Naive thymus-derived CD4-positive, alpha-beta T cell (primary cell): ENCODE measurements at regions of chrX and their contacts with region 1.

Region 1: GRCh38 chrX:46446727-46447378 is 98.4 kb downstream of the ZNF674 start:
- DNase-seq: peak; percentile 75 to 86 (median 81)
- ATAC-seq: peak; percentile 94
- H3K4me3 ChIP-seq: peak overlapping the region; percentile 83
- H3K4me3 Mint-ChIP-seq: peak overlapping the region; percentile 77 to 91 (median 85)
- H3K27ac ChIP-seq: peak overlapping the region; percentile 86
- H3K27ac Mint-ChIP-seq: peak overlapping the region; percentile 79 to 92 (median 90)
- H3K4me1 ChIP-seq: peaks cover 5 to 7% of the 10 kb centered on the region in 2 donors
- H3K4me1 Mint-ChIP-seq: peaks cover 0 to 29% (median 20%) of the 10 kb centered on the region in 7 donors
- H3K27me3 ChIP-seq: no peaks in the 10 kb centered on the region
- H3K27me3 Mint-ChIP-seq: no peaks in the 10 kb centered on the region

Region 2: GRCh38 chrX:44975666-44976263 is 1471.1 kb before region 1 on chrX:
- CTCF ChIA-PET with region 1: no interaction called
- POLR2A ChIA-PET with region 1: no interaction called
- intact Hi-C with region 1: no loop called
- DNase-seq: no peak
- ATAC-seq: no peak
- H3K4me3 ChIP-seq: no peak overlapping the region
- H3K4me3 Mint-ChIP-seq: no peak overlapping the region
- H3K27ac ChIP-seq: no peak overlapping the region
- H3K27ac Mint-ChIP-seq: no peak overlapping the region
- H3K4me1 ChIP-seq: no peaks in the 10 kb centered on the region
- H3K4me1 Mint-ChIP-seq: peaks cover 11 to 63% (median 22%) of the 10 kb centered on the region in 7 donors
- H3K27me3 ChIP-seq: no peaks in the 10 kb centered on the region
- H3K27me3 Mint-ChIP-seq: no peaks in the 10 kb centered on the region

Region 3: GRCh38 chrX:46408553-46409407 is 38.1 kb before region 1 on chrX:
- CTCF ChIA-PET with region 1: no interaction called
- POLR2A ChIA-PET with region 1: no interaction called
- intact Hi-C with region 1: loop called in 1 of 2 experiments (anchors 2 kb)
- DNase-seq: peak; percentile 12 to 61 (median 38)
- ATAC-seq: peak; percentile 54
- H3K4me3 ChIP-seq: no peak overlapping the region
- H3K4me3 Mint-ChIP-seq: no peak overlapping the region
- H3K27ac ChIP-seq: no peak overlapping the region
- H3K27ac Mint-ChIP-seq: peak overlapping the region in 1 of 9 donors; percentile 59
- H3K4me1 ChIP-seq: no peaks in the 10 kb centered on the region
- H3K4me1 Mint-ChIP-seq: peaks cover 0 to 2% (median 0%) of the 10 kb centered on the region in 7 donors
- H3K27me3 ChIP-seq: no peaks in the 10 kb centered on the region
- H3K27me3 Mint-ChIP-seq: peaks cover 0 to 5% (median 0%) of the 10 kb centered on the region in 5 donors

Region 4: DNA sequence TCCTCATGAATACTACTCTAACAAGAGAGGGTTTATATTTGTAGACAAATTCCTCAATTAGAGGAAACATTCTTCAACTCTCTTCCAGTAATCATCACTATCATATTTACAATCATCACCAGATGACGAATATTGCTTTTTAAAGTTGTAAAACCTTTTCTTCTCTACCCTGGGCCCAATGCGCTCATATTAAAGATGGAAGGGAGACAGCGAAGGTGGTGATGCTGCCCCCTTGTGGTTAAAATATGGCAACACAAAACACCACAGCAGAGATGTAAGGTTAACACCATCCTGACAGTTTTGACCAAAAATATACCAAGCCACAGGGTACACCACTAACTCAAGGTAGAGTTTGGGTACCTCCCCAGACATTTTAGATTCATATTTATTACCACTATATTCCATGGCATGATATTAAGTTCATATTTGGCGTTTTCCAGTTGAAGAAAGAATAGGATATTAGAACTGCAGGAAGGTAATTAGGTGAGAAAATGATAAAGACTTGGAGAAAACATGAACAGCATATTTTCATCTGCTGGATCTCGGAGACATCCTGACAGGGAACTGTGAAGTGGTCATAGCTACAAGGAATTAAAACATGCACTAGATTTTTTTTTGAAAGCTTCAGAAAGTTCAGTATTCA is 239.3 kb after region 1 on chrX:
- CTCF ChIA-PET with region 1: no interaction called
- POLR2A ChIA-PET with region 1: no interaction called
- intact Hi-C with region 1: loop called in 1 of 2 experiments (anchors 10 kb)
- DNase-seq: peak in 6 of 9 donors; percentile 5 to 42 (median 28)
- ATAC-seq: peak; percentile 54
- H3K4me3 ChIP-seq: no peak overlapping the region
- H3K4me3 Mint-ChIP-seq: no peak overlapping the region
- H3K27ac ChIP-seq: no peak overlapping the region
- H3K27ac Mint-ChIP-seq: no peak overlapping the region
- H3K4me1 ChIP-seq: no peaks in the 10 kb centered on the region
- H3K4me1 Mint-ChIP-seq: peaks cover 0 to 15% (median 0%) of the 10 kb centered on the region in 7 donors
- H3K27me3 ChIP-seq: no peaks in the 10 kb centered on the region
- H3K27me3 Mint-ChIP-seq: no peaks in the 10 kb centered on the region

Region 5: GRCh38 chrX:46836701-46837557 is 390.1 kb after region 1 on chrX and contains the start of gene RP2:
- CTCF ChIA-PET with region 1: no interaction called
- POLR2A ChIA-PET with region 1: no interaction called
- intact Hi-C with region 1: loop called in 1 of 2 experiments (anchors 1 kb)
- DNase-seq: peak; percentile 65 to 84 (median 81)
- ATAC-seq: peak; percentile 98
- H3K4me3 ChIP-seq: peak within 1 kb of the TSS; percentile 91
- H3K4me3 Mint-ChIP-seq: peak within 1 kb of the TSS; percentile 93 to 99 (median 97)
- H3K27ac ChIP-seq: peak within 1 kb of the TSS; percentile 83
- H3K27ac Mint-ChIP-seq: peak within 1 kb of the TSS; percentile 80 to 98 (median 93)
- H3K4me1 ChIP-seq: no peaks in the 10 kb centered on the region
- H3K4me1 Mint-ChIP-seq: peaks cover 0 to 29% (median 12%) of the 10 kb centered on the region in 7 donors
- H3K27me3 ChIP-seq: no peaks in the 10 kb centered on the region
- H3K27me3 Mint-ChIP-seq: peaks cover 0 to 3% (median 0%) of the 10 kb centered on the region in 5 donors
- total RNA-seq, gene RP2: 4.9 to 14.5 (median 6.3) TPM

Region 6: DNA sequence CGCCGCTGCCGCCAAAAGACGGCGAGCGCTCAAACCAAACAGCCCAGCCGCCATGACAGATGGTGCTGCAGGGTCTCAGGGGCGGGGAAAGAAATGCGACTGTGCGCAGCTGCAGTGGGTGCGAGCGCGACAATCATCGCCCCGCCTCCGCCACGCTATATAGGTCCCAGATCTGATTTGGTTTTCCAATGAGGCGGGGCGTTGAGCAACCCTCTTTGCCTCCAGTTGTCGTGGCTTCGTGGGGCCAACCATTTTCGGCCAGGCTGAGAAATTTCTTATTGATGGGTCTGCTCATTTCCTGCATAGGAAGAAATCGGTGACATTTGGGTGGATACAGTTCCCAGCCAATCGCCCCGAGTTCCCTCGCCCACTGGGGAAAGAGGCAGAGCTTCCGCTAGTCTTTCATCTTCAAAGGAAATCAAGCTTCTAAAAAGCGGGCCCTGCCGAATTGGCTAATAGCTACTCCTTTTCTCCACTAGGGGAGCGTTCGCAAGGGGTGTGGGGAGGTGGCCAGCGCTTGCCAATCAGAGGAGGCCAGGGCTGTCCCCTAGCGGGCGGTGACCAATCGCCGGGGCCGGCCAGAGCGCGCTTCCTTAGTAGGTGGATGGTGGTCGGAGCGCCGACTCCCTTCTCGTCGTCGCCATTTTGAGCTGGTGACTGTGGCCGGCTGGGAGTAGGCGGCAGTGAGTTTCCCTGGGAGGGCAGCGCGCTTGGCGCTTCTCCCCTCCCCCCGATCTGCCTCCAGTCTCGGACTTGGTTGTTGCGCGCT is 698.0 kb after region 1 on chrX and contains the starts of genes NDUFB11 and RBM10:
- CTCF ChIA-PET with region 1: no interaction called
- POLR2A ChIA-PET with region 1: no interaction called
- intact Hi-C with region 1: loop called in 1 of 2 experiments (anchors 5 kb)
- DNase-seq: peak; percentile 64 to 90 (median 87)
- ATAC-seq: peak; percentile 95
- H3K4me3 ChIP-seq: peak within 1 kb of the TSS; percentile 77
- H3K4me3 Mint-ChIP-seq: peak within 1 kb of the TSS; percentile 92 to 99 (median 96)
- H3K27ac ChIP-seq: peak within 1 kb of the TSS; percentile 94
- H3K27ac Mint-ChIP-seq: peak within 1 kb of the TSS; percentile 93 to 99 (median 96)
- H3K4me1 ChIP-seq: peaks cover 6 to 12% of the 10 kb centered on the region in 2 donors
- H3K4me1 Mint-ChIP-seq: peaks cover 6 to 42% (median 26%) of the 10 kb centered on the region in 7 donors
- H3K27me3 ChIP-seq: no peaks in the 10 kb centered on the region
- H3K27me3 Mint-ChIP-seq: no peaks in the 10 kb centered on the region
- total RNA-seq, gene NDUFB11: 51.3 to 92.5 (median 55.2) TPM
- total RNA-seq, gene RBM10: 31.8 to 55.6 (median 47.6) TPM